CD4-positive, alpha-beta memory T cell (primary cell): ENCODE measurements at regions of chr2 and their contacts with region 1.

Region 1: GRCh38 chr2:27489498-27490397 is at the start of gene IFT172:
- DNase-seq: peak; percentile 96 to 100 (median 100)
- H3K4me3 ChIP-seq: peak within 1 kb of the TSS; percentile 52 to 92
- H3K4me3 Mint-ChIP-seq: peak within 1 kb of the TSS; percentile 59 to 93 (median 84)
- H3K27ac ChIP-seq: peak within 1 kb of the TSS; percentile 81
- H3K27ac Mint-ChIP-seq: peak within 1 kb of the TSS; percentile 71 to 100 (median 99)
- H3K4me1 ChIP-seq: peaks cover 18% of the 10 kb centered on the region
- H3K4me1 Mint-ChIP-seq: peaks cover 11 to 20% (median 13%) of the 10 kb centered on the region in 4 donors
- H3K27me3 ChIP-seq: peaks cover 6% of the 10 kb centered on the region
- H3K27me3 Mint-ChIP-seq: peaks cover 4% of the 10 kb centered on the region in 2 donors
- total RNA-seq, gene IFT172: 23.6 to 24.4 TPM

Region 2: DNA sequence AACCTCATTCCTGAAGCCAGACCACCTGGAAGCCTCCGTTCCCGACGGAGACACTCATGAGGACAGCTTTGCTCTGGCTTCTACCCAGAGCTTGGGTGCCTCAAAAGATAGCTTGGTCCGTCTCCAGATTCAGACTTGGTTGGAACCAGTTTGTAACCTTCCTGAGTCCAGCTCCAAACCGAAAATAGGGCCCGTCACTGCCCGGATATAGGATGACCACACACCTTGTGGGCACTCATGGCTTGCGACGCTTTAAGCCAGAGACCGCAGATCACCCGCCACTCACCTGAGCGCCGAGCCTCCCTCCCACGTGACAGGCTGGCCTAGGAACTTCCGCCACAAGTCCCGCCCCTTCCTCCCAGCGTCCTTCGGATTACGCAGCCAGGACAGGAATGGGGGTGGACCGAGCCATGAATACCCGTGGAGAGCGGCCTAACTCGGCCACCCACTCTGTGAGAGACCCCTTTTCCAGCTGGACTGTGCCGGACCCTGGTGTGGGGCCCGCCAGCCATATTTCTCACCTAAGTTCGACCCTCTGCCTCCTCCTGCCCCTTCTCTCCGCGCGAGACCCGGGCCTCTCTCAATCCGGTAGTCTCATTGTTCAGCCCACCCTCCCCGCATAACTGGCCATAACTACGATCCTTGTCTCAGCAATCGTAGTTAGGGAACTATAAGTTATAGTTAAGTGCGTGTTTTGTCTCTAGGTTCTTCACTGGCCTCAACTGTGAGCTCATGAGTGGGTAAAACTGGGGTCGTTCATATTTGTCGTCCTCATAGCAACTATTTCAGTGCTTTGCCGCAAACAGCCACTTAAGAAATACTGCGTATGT is 166.8 kb before region 1 on chr2 and contains the start of gene MPV17:
- CTCF ChIA-PET with region 1: no interaction called
- POLR2A ChIA-PET with region 1: no interaction called
- intact Hi-C with region 1: loop called (anchors 1 kb)
- DNase-seq: peak; percentile 82 to 89 (median 82)
- H3K4me3 ChIP-seq: peak within 1 kb of the TSS; percentile 81 to 97
- H3K4me3 Mint-ChIP-seq: peak within 1 kb of the TSS; percentile 95 to 100 (median 96)
- H3K27ac ChIP-seq: peak within 1 kb of the TSS; percentile 95
- H3K27ac Mint-ChIP-seq: peak within 1 kb of the TSS; percentile 96 to 100 (median 98)
- H3K4me1 ChIP-seq: peaks cover 25% of the 10 kb centered on the region
- H3K4me1 Mint-ChIP-seq: peaks cover 12 to 28% (median 18%) of the 10 kb centered on the region in 4 donors
- H3K27me3 ChIP-seq: no peaks in the 10 kb centered on the region
- H3K27me3 Mint-ChIP-seq: no peaks in the 10 kb centered on the region
- total RNA-seq, gene MPV17: 89.3 to 93.3 TPM

Region 3: GRCh38 chr2:27356382-27357181 is 133.2 kb before region 1 on chr2 and contains the start of gene GTF3C2:
- CTCF ChIA-PET with region 1: no interaction called
- POLR2A ChIA-PET with region 1: interaction called, 4 read pairs
- intact Hi-C with region 1: loop called (anchors 1 kb)
- DNase-seq: peak; percentile 93 to 97 (median 93)
- H3K4me3 ChIP-seq: peak within 1 kb of the TSS; percentile 49 to 75
- H3K4me3 Mint-ChIP-seq: peak within 1 kb of the TSS; percentile 96 to 100 (median 98)
- H3K27ac ChIP-seq: peak within 1 kb of the TSS; percentile 85
- H3K27ac Mint-ChIP-seq: peak within 1 kb of the TSS; percentile 96 to 100 (median 99)
- H3K4me1 ChIP-seq: peaks cover 51% of the 10 kb centered on the region
- H3K4me1 Mint-ChIP-seq: peaks cover 36 to 64% (median 48%) of the 10 kb centered on the region in 4 donors
- H3K27me3 ChIP-seq: no peaks in the 10 kb centered on the region
- H3K27me3 Mint-ChIP-seq: no peaks in the 10 kb centered on the region
- total RNA-seq, gene GTF3C2: 82.9 to 90.8 TPM

Region 4: DNA sequence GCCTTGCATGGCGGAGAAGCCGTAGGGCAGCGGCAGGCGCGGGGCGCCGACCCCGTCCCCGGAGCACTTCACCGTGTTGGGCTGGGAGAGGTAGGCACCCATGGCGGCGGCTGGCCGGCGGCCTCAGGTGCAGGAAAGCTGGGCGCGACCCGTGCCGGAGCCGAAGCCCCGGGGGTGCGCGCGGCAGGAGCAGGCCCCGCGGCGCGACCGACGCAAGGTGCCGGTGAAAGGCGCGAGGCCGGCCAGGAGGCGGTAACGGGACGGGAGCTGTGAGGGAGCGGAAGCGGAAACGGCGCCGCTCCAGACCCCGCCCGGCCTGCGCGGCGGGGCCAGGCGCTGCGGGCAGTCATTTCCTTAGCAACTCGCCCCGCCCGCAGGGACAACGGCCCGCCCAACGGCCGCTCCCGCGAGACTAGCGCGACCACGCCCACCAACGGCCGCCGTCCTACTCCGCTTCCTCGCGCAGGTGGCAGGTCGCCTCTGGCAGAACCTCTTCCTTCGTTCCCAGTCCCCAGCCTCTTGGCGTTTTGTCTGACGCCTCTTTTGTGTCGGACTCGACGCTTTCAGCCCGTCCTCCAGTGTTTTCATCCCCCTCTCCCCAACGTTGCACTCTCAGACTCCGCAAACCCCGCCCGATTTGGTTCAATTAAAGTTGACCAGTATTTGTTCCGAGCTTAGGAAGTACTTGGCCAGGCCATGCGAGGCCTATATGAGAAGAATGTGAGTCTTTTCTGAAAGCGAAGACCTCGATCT is 80.3 kb before region 1 on chr2 and contains the start of gene PPM1G:
- CTCF ChIA-PET with region 1: no interaction called
- POLR2A ChIA-PET with region 1: interaction called, 10 read pairs
- intact Hi-C with region 1: loop called (anchors 1 kb)
- DNase-seq: peak; percentile 94 to 95 (median 94)
- H3K4me3 ChIP-seq: peak within 1 kb of the TSS; percentile 61 to 92
- H3K4me3 Mint-ChIP-seq: peak within 1 kb of the TSS; percentile 87 to 94 (median 90)
- H3K27ac ChIP-seq: peak within 1 kb of the TSS; percentile 85
- H3K27ac Mint-ChIP-seq: peak within 1 kb of the TSS; percentile 91 to 99 (median 96)
- H3K4me1 ChIP-seq: peaks cover 36% of the 10 kb centered on the region
- H3K4me1 Mint-ChIP-seq: peaks cover 25 to 47% (median 34%) of the 10 kb centered on the region in 4 donors
- H3K27me3 ChIP-seq: no peaks in the 10 kb centered on the region
- H3K27me3 Mint-ChIP-seq: peaks cover 1 to 2% of the 10 kb centered on the region in 2 donors
- total RNA-seq, gene PPM1G: 53.8 to 56.1 TPM

Region 5: DNA sequence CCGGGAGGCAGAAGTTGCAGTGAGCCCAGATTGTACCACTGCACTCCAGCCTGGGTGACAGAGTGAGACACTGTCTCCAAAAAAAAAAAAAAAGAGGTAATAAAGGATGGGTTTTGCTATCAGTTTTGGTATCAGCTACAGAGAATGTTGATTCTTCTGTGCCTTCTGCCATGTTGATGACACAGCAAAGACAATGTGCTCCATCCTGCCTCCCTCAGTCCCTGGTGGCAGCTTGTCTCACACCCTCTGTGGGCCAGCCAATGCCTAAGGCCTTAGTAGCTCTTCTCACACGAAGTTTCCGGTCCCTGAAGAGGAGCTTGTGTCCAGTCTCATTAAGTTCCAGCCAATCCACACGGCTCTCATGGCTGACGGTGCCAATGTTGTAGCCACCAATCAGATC is 17.8 kb before region 1 on chr2:
- CTCF ChIA-PET with region 1: no interaction called
- POLR2A ChIA-PET with region 1: no interaction called
- intact Hi-C with region 1: no loop called
- DNase-seq: no peak
- H3K4me3 ChIP-seq: no peak overlapping the region
- H3K4me3 Mint-ChIP-seq: no peak overlapping the region
- H3K27ac ChIP-seq: no peak overlapping the region
- H3K27ac Mint-ChIP-seq: no peak overlapping the region
- H3K4me1 ChIP-seq: no peaks in the 10 kb centered on the region
- H3K4me1 Mint-ChIP-seq: no peaks in the 10 kb centered on the region
- H3K27me3 ChIP-seq: no peaks in the 10 kb centered on the region
- H3K27me3 Mint-ChIP-seq: no peaks in the 10 kb centered on the region

Region 6: GRCh38 chr2:27582695-27583389 is 93.1 kb after region 1 on chr2 and contains the start of gene ZNF512:
- CTCF ChIA-PET with region 1: no interaction called
- POLR2A ChIA-PET with region 1: no interaction called
- intact Hi-C with region 1: loop called (anchors 2 kb)
- DNase-seq: peak; percentile 73 to 81 (median 78)
- H3K4me3 ChIP-seq: peak within 1 kb of the TSS; percentile 59 to 96
- H3K4me3 Mint-ChIP-seq: peak within 1 kb of the TSS; percentile 90 to 100 (median 95)
- H3K27ac ChIP-seq: peak within 1 kb of the TSS; percentile 70
- H3K27ac Mint-ChIP-seq: peak within 1 kb of the TSS; percentile 86 to 99 (median 97)
- H3K4me1 ChIP-seq: peaks cover 50% of the 10 kb centered on the region
- H3K4me1 Mint-ChIP-seq: peaks cover 37 to 67% (median 46%) of the 10 kb centered on the region in 4 donors
- H3K27me3 ChIP-seq: no peaks in the 10 kb centered on the region
- H3K27me3 Mint-ChIP-seq: no peaks in the 10 kb centered on the region
- total RNA-seq, gene ZNF512: 51.9 to 66.2 TPM

Region 7: DNA sequence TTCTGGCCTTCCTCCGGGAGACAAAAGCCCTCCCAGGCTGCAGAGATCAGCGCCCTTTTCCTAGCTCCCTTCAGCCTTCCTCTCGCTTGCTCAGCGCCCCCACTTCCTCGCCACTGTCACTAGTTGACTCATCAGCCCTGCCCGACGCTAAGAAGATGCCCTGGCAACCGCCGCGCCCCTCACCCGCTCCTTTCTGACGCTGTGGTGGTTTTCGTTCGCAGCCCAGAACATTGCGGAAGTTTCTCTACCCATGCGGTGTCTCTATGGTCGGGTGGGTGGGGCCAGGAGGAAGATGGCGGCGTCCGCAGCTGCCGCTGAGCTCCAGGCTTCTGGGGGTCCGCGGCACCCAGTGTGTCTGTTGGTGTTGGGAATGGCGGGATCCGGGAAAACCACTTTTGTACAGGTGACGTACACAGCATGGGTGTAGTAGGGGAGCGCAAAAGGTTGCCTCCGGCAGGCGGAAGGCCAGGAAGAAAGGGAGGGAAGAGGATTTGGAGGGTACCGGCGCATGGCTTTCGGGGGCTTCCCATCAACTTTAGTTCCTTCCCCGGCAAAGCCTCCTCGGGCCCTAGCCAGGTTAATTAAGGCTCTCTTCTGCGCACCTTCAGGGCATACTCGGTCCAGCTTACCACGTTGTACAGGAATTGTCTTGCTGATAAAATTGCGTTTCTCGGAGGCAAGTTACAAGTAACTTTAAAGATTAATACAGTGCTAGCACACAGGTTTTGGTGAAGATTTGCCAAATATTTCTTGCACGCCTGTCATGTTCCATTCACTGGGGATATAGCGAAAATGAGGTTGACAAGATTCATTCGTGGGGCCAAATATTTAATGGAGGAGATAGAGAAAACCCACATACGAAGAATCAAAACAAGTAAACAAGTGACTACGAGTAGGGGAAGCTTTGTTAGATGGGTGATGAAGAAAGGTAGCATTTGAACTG is 139.3 kb after region 1 on chr2 and contains the starts of genes CCDC121 and GPN1:
- CTCF ChIA-PET with region 1: no interaction called
- POLR2A ChIA-PET with region 1: no interaction called
- intact Hi-C with region 1: loop called (anchors 1 kb)
- DNase-seq: peak; percentile 93 to 98 (median 94)
- H3K4me3 ChIP-seq: peak within 1 kb of the TSS; percentile 68 to 92
- H3K4me3 Mint-ChIP-seq: peak within 1 kb of the TSS in 2 of 8 donors; percentile 8 to 57
- H3K27ac ChIP-seq: peak within 1 kb of the TSS; percentile 85
- H3K27ac Mint-ChIP-seq: peak within 1 kb of the TSS in 3 of 7 donors; percentile 76 to 85 (median 78)
- H3K4me1 ChIP-seq: peaks cover 17% of the 10 kb centered on the region
- H3K4me1 Mint-ChIP-seq: peaks cover 9 to 21% (median 11%) of the 10 kb centered on the region in 4 donors
- H3K27me3 ChIP-seq: no peaks in the 10 kb centered on the region
- H3K27me3 Mint-ChIP-seq: no peaks in the 10 kb centered on the region
- total RNA-seq, gene CCDC121: 1.3 to 2.2 TPM
- total RNA-seq, gene GPN1: 28.9 to 32.8 TPM